Activated T-helper 2 cell treated with anti-CD3 and anti-CD28 coated beads, Interferon-gamma antibody, Interleukin-2, Interleukin-4, amounts not matched to agents 10 μg/mL and 5 μg/mL and 100 μg/mL, durations not matched to agents 14 hours and 24 hours and 36 hours (primary cell): ENCODE measurements at regions of chr16 and their contacts with region 1.

Region 1: DNA sequence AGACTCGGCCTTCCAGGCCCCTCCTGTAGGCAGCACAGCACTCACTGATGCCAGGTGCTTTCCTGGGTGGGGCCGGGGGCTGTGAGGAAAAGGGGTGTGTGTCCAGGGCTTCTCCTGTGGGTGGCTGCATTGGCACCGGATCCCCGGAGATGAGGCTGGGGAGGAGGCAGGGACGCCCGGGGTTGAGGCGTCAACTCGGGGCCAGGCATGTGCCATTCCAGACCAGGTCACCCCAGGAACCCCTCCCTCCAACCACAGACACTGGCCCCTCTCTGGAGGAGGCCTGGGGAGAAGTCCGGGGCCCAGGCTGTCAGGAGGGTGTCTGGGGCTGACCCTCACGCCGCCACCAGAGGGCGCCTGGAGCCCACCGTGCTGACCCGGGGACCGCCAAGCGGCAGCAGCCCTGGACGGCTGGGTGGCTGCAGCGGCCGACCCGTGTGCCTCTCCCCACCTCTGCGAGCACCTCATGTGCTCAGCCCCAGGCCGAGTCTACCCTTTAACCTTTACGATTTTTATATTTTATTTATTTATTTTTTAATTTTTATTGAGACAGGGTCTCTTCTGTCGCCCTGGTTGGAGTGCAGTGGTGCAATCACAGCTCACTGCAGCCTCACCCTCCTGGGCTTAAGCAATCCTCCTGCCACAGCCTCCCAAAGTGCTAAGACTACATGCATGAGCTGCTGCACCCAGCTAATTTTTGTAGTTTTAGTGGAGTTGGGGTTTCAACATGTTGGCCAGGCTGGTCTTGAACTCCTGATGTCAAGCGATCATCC is 3.2 kb upstream of the METRN start:
- DNase-seq: peak; percentile 65
- H3K4me3 Mint-ChIP-seq: no peak overlapping the region
- H3K27ac Mint-ChIP-seq: no peak overlapping the region
- H3K4me1 Mint-ChIP-seq: peaks cover 4% of the 10 kb centered on the region
- H3K27me3 Mint-ChIP-seq: peaks cover 25% of the 10 kb centered on the region

Region 2: DNA sequence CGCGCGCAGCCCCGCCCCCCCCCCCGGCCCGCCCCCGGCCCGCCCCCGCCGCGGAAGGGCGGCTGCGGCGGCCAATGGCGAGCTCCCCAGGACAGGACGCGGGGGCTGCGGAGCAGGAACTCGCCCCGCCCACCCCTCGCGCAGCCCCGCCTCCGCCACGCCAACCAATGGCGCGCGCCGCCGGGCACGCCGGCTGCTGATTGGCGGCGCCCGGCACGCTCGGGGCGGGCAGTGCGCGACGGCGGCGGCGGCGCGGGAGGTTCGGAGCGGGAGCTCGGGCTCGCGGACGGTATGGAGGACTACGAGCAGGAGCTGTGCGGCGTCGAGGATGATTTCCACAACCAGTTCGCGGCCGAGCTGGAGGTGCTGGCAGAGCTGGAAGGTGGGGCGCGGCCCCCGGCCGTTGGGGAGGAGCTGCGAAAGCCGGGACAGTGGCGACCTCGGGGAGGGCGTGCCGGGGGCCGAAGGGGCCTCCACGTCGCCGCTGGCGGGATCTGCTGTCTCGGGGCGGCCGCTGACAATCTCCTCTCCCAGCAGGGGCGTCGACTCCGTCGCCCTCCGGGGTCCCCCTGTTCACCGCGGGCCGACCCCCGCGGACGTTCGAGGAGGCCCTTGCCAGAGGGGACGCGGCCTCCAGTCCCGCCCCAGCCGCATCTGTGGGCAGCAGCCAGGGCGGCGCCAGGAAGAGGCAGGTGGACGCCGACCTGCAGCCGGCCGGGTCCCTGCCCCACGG is 76.8 kb after region 1 on chr16 and contains the start of gene CHTF18:
- intact Hi-C with region 1: loop called (anchors 1 kb)
- DNase-seq: peak; percentile 92
- H3K4me3 Mint-ChIP-seq: peak within 1 kb of the TSS; percentile 86
- H3K27ac Mint-ChIP-seq: peak within 1 kb of the TSS; percentile 68
- H3K4me1 Mint-ChIP-seq: peaks cover 5% of the 10 kb centered on the region
- H3K27me3 Mint-ChIP-seq: no peaks in the 10 kb centered on the region
- total RNA-seq, gene CHTF18: 108 and 119 TPM in 2 replicates